CD4-positive, alpha-beta memory T cell (primary cell): ENCODE measurements at regions of chr6 and their contacts with region 1.

Region 1: DNA sequence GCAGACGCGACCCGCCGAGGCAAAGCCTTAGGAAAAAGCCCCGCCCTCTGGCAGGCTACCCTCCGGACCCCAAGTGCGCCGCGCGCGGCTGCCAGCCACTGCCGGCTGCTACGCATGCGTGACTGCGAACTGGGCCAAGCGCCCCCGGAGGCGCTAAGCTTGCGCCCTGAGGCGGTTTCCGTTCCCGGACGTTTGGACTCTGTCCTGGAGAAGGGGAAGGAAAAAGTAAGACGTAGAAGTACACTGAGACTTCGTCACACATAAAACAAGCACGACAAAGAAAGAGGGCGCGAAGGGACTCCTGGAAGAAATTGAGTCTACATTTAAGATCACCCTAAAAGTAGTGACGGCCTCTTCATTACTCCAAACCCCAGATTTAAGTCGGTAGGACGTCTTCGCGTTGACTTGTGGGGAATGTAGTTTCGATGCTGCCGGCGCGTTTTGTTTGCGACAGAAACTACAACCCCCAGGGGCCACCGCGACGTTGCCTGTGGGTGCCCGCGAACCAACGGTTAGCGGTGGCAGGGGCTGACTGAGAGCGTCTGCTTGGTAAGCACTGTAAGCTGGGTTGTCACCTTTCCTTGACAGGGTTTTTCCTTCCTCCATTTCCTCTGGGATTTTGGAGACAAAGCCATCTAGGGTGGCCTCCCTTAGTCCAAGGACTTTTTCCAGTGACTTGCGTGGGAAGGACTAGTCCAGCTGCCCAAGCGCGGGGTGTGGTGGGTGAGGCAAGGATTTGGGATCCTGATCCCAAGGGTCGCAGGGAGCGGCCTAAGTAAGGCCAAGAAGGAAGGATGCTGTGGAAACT is at the start of gene CEP57L1:
- DNase-seq: peak; percentile 94 to 97 (median 95)
- H3K4me3 ChIP-seq: peak within 1 kb of the TSS; percentile 74 to 80
- H3K4me3 Mint-ChIP-seq: peak within 1 kb of the TSS; percentile 90 to 97 (median 95)
- H3K27ac ChIP-seq: peak within 1 kb of the TSS; percentile 97
- H3K27ac Mint-ChIP-seq: peak within 1 kb of the TSS; percentile 97 to 100 (median 99)
- H3K4me1 ChIP-seq: peaks cover 44% of the 10 kb centered on the region
- H3K4me1 Mint-ChIP-seq: peaks cover 36 to 60% (median 44%) of the 10 kb centered on the region in 4 donors
- H3K27me3 ChIP-seq: no peaks in the 10 kb centered on the region
- H3K27me3 Mint-ChIP-seq: no peaks in the 10 kb centered on the region
- total RNA-seq, gene CEP57L1: 5.7 to 9.2 TPM

Region 2: GRCh38 chr6:107957909-107958688 is 1137.1 kb before region 1 on chr6 and contains the start of gene SEC63:
- CTCF ChIA-PET with region 1: no interaction called
- POLR2A ChIA-PET with region 1: interaction called, 3 read pairs
- intact Hi-C with region 1: loop called (anchors 5 kb)
- DNase-seq: peak; percentile 95 to 96 (median 96)
- H3K4me3 ChIP-seq: peak within 1 kb of the TSS; percentile 55 to 80
- H3K4me3 Mint-ChIP-seq: peak within 1 kb of the TSS; percentile 92 to 100 (median 98)
- H3K27ac ChIP-seq: peak within 1 kb of the TSS; percentile 86
- H3K27ac Mint-ChIP-seq: peak within 1 kb of the TSS; percentile 92 to 98 (median 97)
- H3K4me1 ChIP-seq: peaks cover 29% of the 10 kb centered on the region
- H3K4me1 Mint-ChIP-seq: peaks cover 18 to 39% (median 29%) of the 10 kb centered on the region in 4 donors
- H3K27me3 ChIP-seq: no peaks in the 10 kb centered on the region
- H3K27me3 Mint-ChIP-seq: no peaks in the 10 kb centered on the region
- total RNA-seq, gene SEC63: 91.7 to 95.5 TPM

Region 3: GRCh38 chr6:108260809-108261569 is 834.2 kb before region 1 on chr6 and contains the start of gene SNX3:
- CTCF ChIA-PET with region 1: no interaction called
- POLR2A ChIA-PET with region 1: interaction called, 4 read pairs
- intact Hi-C with region 1: loop called (anchors 10 kb)
- DNase-seq: peak; percentile 90 to 94 (median 91)
- H3K4me3 ChIP-seq: peak within 1 kb of the TSS; percentile 93 to 98
- H3K4me3 Mint-ChIP-seq: peak within 1 kb of the TSS; percentile 86 to 97 (median 92)
- H3K27ac ChIP-seq: peak within 1 kb of the TSS; percentile 84
- H3K27ac Mint-ChIP-seq: peak within 1 kb of the TSS; percentile 89 to 97 (median 95)
- H3K4me1 ChIP-seq: peaks cover 43% of the 10 kb centered on the region
- H3K4me1 Mint-ChIP-seq: peaks cover 15 to 38% (median 27%) of the 10 kb centered on the region in 4 donors
- H3K27me3 ChIP-seq: no peaks in the 10 kb centered on the region
- H3K27me3 Mint-ChIP-seq: peaks cover 0 to 2% of the 10 kb centered on the region in 2 donors
- total RNA-seq, gene SNX3: 65.9 to 66.6 TPM

Region 4: GRCh38 chr6:109059571-109060021 is 35.6 kb before region 1 on chr6:
- CTCF ChIA-PET with region 1: no interaction called
- POLR2A ChIA-PET with region 1: interaction called, 10 read pairs
- intact Hi-C with region 1: no loop called
- DNase-seq: peak; percentile 52 to 65 (median 58)
- H3K4me3 ChIP-seq: no peak overlapping the region
- H3K4me3 Mint-ChIP-seq: peak overlapping the region in 7 of 8 donors; percentile 35 to 78 (median 61)
- H3K27ac ChIP-seq: peak overlapping the region; percentile 52
- H3K27ac Mint-ChIP-seq: peak overlapping the region; percentile 71 to 95 (median 92)
- H3K4me1 ChIP-seq: peaks cover 36% of the 10 kb centered on the region
- H3K4me1 Mint-ChIP-seq: peaks cover 31 to 59% (median 39%) of the 10 kb centered on the region in 4 donors
- H3K27me3 ChIP-seq: no peaks in the 10 kb centered on the region
- H3K27me3 Mint-ChIP-seq: no peaks in the 10 kb centered on the region

Region 5: DNA sequence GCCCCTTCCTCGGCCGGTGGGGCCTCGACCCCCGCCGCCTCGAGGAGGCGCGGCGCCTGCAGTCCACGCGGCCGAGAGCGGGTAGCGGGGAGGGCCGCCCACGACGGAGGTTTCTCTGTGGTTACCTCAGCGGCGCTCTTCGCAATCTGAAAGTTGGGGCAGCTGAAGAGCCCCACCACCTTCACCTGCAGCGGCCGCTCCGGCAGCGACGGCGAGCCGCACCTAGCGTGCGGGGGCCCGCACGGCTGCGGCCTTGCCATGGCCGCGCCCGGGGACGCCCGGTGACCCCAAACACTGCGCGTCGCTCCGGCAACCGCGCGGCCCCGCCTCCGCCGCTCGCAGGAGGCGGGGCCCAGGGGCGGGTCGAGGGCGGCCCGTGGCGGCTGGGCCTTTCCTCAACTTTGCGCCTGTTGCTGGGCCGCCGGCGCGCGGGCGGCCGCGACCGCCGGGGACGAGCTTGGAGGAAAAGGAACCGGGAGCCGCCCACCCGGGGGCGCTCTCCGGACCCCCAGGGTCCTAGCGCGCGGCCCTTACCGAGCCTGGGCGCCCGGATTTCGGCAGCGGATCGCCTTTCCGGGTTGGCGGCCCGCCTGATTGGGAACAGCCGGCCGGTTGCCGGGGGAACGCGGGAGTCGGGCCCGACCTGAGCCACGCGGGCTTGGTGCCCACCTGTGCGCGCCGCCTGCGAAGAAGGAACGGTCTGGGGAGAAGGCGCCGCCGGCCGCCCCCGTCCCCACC is 345.3 kb after region 1 on chr6 and contains the starts of genes PPIL6 and SMPD2:
- CTCF ChIA-PET with region 1: interaction called, 3 read pairs
- POLR2A ChIA-PET with region 1: interaction called, 5 read pairs
- intact Hi-C with region 1: loop called (anchors 2 kb)
- DNase-seq: peak; percentile 77 to 84 (median 80)
- H3K4me3 ChIP-seq: peak within 1 kb of the TSS; percentile 69 to 82
- H3K4me3 Mint-ChIP-seq: peak within 1 kb of the TSS; percentile 91 to 98 (median 94)
- H3K27ac ChIP-seq: peak within 1 kb of the TSS; percentile 89
- H3K27ac Mint-ChIP-seq: peak within 1 kb of the TSS; percentile 96 to 98 (median 97)
- H3K4me1 ChIP-seq: peaks cover 25% of the 10 kb centered on the region
- H3K4me1 Mint-ChIP-seq: peaks cover 15 to 32% (median 21%) of the 10 kb centered on the region in 4 donors
- H3K27me3 ChIP-seq: no peaks in the 10 kb centered on the region
- H3K27me3 Mint-ChIP-seq: no peaks in the 10 kb centered on the region
- total RNA-seq, gene PPIL6: 0.39 to 0.52 TPM
- total RNA-seq, gene SMPD2: 21.7 to 23.6 TPM

Region 6: DNA sequence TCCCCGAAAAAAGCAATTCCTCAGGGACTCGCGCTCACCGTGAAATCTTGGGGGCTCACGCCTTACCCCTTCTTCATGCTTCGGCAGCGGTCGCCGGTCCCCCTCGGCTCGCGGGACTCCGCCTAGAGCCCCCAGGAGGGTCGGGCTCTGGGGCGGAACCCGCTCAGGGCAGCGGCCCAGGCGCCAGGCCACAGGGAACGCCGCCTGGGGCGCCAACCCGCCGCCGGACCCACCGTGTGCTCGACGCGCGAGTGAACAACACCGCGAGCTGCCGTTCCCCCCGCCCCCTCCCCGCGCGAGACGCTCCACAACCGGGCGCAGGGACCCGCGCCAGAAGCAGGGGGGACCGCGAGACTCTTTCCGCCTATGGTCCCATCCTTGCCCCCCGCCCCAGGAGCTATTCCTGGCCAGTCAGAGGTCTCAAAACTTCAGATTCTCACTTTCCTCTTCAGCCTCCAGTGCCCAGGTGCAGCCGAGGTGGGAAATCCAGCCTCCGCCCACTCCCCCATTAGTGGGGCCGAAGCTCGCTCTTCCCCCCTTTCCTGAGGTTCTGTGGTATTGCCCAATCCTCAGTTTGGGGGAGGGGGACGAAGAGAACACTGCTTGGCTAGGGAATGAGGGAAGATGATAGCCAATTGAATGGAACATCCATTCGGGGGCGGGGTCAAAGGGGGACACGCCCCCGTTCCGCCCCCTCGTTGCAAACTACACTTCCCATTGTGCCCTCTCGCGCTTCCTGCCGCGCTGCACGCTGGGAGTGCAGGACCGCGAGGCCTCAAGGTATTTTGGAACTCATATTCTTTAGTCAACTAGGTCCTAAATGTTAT is 1084.4 kb after region 1 on chr6 and contains the start of gene WASF1:
- CTCF ChIA-PET with region 1: no interaction called
- POLR2A ChIA-PET with region 1: no interaction called
- intact Hi-C with region 1: loop called (anchors 1 kb)
- DNase-seq: peak; percentile 90 to 93 (median 92)
- H3K4me3 ChIP-seq: peak within 1 kb of the TSS; percentile 77 to 92
- H3K4me3 Mint-ChIP-seq: peak within 1 kb of the TSS; percentile 82 to 92 (median 86)
- H3K27ac ChIP-seq: peak within 1 kb of the TSS; percentile 88
- H3K27ac Mint-ChIP-seq: peak within 1 kb of the TSS; percentile 24 to 90 (median 64)
- H3K4me1 ChIP-seq: peaks cover 46% of the 10 kb centered on the region
- H3K4me1 Mint-ChIP-seq: peaks cover 5 to 7% (median 6%) of the 10 kb centered on the region in 4 donors
- H3K27me3 ChIP-seq: no peaks in the 10 kb centered on the region
- H3K27me3 Mint-ChIP-seq: peaks cover 4 to 5% of the 10 kb centered on the region in 2 donors
- total RNA-seq, gene WASF1: 0.39 to 0.70 TPM